H1 (cell line): ENCODE measurements at regions of chr17 and their contacts with region 1.

Region 1: GRCh38 chr17:43673516-43674323 is 12.0 kb upstream of the MEOX1 start:
- DNase-seq: peak in 1 of 2 experiments; percentile 93
- H3K4me3 ChIP-seq: no peak overlapping the region
- H3K27ac ChIP-seq: no peak overlapping the region
- H3K4me1 ChIP-seq: peaks cover 0 to 20% (median 13%) of the 10 kb centered on the region in 4 experiments; a peak in 6 of 7 replicates
- H3K27me3 ChIP-seq: 0 out of 7 replicates have a peak, but pooled peaks cover 0 to 2% (median 0%) of the 10 kb centered on the region in 4 experiments
- CTCF ChIP-seq: peak; percentile 84 to 92 (median 91)
- EP300 ChIP-seq: no peak
- POLR2A ChIP-seq: no peak
- RAD21 ChIP-seq: peak; percentile 94 to 95

Region 2: GRCh38 chr17:43517615-43518386 is 155.9 kb before region 1 on chr17:
- CTCF ChIA-PET with region 1: interaction called, 12 read pairs
- POLR2A ChIA-PET with region 1: no interaction called
- DNase-seq: no peak
- H3K4me3 ChIP-seq: no peak overlapping the region
- H3K27ac ChIP-seq: no peak overlapping the region
- H3K4me1 ChIP-seq: no peaks in the 10 kb centered on the region
- H3K27me3 ChIP-seq: no peaks in the 10 kb centered on the region
- CTCF ChIP-seq: no peak
- EP300 ChIP-seq: no peak
- POLR2A ChIP-seq: no peak
- RAD21 ChIP-seq: no peak

Region 3: DNA sequence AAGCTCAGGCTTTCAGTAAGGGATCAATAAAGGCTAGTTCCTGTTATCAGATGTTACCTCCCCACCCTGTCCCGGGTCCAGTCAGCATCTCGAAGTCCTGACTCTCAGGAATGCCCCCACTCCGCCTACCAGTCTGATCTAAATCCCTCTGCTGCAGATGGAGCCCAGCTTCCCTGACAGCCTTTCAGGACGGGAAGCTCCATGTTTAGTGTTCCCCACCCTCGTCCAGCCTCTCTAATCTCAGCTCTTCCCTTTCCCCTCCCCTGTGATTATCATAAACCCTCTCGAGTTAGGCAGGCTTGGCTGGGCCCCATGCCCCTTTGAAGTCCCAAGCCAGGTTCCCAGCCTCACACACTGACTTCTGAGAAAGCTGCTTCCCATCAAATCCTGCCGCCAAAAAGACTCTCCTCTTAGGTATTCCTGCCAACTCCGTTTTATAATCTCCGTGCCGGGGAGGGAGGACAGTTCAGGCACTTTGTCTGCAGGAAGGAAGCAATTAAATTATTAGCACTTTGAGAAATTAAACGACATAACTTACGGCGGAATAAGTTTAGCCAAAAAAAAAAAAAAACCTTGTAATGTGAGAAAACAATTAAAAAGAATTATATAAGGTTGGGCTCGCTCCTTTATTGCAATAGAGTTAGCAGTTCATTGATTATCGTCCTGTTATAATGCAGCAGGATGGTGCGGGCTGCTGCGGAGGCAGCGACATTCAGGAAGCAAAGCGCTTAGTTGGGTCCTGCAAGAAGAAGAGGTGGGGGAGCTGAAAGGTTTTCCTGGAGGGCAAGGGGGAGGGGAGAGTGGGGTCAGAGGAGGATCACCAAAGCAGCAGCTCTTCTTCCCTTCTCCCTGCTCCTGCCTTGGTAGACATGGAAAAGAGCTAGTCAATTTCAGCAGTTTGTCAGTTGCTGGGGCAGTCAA is 110.8 kb before region 1 on chr17:
- CTCF ChIA-PET with region 1: interaction called, 13 read pairs
- POLR2A ChIA-PET with region 1: interaction called, 5 read pairs
- DNase-seq: no peak
- H3K4me3 ChIP-seq: peak overlapping the region in 2 of 4 experiments; percentile 14 to 43; a peak in 3 of 8 replicates
- H3K27ac ChIP-seq: no peak overlapping the region
- H3K4me1 ChIP-seq: peaks cover 13 to 24% (median 20%) of the 10 kb centered on the region in 4 experiments
- H3K27me3 ChIP-seq: peaks cover 0 to 3% (median 1%) of the 10 kb centered on the region in 4 experiments; a peak in 3 of 7 replicates
- CTCF ChIP-seq: no peak
- EP300 ChIP-seq: no peak
- POLR2A ChIP-seq: no peak
- RAD21 ChIP-seq: no peak

Region 4: DNA sequence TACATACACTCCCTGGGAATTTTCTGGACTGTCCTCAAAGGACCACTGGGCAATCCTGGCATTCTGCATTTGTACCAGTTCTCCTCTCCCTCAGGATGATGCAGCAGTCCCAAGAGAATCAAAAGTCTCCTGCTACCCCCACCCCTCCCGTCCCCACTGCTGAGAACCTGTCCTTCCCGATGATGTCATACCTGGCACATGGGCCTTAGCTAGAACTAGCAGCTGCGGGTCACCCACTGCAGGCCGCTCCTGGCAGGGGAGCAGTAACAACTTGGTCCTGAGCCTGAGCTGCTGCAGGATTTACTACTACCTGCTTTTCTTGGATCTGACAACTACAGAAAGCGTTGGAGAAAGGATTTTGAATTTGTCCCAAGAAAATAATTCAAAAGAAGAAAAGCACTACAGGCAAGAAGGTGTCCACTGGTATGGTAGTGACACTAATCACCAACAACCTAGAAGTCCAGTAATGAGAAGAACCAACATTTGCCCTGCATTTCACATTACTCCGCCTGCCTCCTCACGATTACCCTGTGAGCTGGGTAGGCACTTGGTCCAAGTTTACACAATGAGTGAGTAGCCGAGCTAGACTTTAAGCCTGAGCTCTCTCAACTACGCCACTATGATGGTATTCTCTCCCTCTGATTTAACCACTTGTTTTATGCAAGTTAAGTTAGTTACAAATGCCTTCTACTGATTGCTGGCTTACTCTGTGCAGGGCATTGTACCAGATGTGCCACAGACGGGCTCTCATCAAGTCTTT is 72.3 kb before region 1 on chr17:
- CTCF ChIA-PET with region 1: interaction called, 18 read pairs
- POLR2A ChIA-PET with region 1: no interaction called
- DNase-seq: no peak
- H3K4me3 ChIP-seq: no peak overlapping the region
- H3K27ac ChIP-seq: no peak overlapping the region
- H3K4me1 ChIP-seq: no peaks in the 10 kb centered on the region; a peak in 3 of 7 replicates
- H3K27me3 ChIP-seq: no peaks in the 10 kb centered on the region
- CTCF ChIP-seq: no peak
- EP300 ChIP-seq: no peak
- POLR2A ChIP-seq: no peak
- RAD21 ChIP-seq: no peak

Region 5: DNA sequence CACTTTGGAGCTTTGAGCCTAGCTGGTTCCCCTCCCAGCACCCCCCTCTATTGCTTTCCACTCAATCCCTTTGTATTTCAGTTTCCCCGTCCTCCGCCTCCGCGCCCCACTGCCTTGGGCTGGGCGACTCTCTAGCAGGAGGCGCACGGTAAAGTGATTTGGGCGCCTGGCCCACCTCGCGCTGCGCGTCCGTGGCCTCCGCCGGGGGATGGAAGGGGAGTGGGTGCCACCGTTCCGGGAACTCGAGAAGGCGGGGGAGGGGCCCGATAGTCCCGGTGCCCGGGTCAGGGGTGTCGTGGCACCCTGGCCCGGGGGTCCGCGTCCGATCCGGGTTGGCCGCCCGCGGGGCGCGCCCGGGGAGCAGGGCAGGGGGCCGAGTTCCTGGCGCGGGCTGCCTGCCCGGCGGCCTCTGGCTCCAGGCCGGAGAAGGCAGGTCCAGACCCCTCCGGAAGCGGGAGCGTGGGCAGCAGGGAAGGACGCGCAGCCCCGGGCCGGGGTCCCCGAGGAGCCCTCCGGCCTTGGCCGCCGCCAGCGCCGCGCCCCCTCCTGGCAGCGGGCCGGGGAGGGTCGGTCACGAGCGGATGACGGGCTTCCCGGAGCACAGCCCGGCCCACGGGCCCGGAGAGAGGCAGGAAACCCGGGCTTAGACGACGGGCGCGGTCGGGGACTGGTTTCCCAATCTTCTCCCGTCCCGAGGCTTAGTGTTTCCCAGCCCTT is 27.8 kb before region 1 on chr17:
- CTCF ChIA-PET with region 1: interaction called, 13 read pairs
- POLR2A ChIA-PET with region 1: interaction called, 3 read pairs
- DNase-seq: peak in 1 of 2 experiments; percentile 78
- H3K4me3 ChIP-seq: peak overlapping the region; percentile 26 to 71 (median 44); a peak in 7 of 8 replicates
- H3K27ac ChIP-seq: no peak overlapping the region
- H3K4me1 ChIP-seq: peaks cover 0 to 6% (median 2%) of the 10 kb centered on the region in 4 experiments; a peak in 2 of 7 replicates
- H3K27me3 ChIP-seq: peaks cover 0 to 20% (median 6%) of the 10 kb centered on the region in 4 experiments; a peak in 4 of 7 replicates
- CTCF ChIP-seq: peak; percentile 6 to 48 (median 48); a peak in 3 of 4 replicates
- EP300 ChIP-seq: no peak
- POLR2A ChIP-seq: no peak
- RAD21 ChIP-seq: peak; percentile 11 to 48; a peak in 2 of 4 replicates

Region 6: DNA sequence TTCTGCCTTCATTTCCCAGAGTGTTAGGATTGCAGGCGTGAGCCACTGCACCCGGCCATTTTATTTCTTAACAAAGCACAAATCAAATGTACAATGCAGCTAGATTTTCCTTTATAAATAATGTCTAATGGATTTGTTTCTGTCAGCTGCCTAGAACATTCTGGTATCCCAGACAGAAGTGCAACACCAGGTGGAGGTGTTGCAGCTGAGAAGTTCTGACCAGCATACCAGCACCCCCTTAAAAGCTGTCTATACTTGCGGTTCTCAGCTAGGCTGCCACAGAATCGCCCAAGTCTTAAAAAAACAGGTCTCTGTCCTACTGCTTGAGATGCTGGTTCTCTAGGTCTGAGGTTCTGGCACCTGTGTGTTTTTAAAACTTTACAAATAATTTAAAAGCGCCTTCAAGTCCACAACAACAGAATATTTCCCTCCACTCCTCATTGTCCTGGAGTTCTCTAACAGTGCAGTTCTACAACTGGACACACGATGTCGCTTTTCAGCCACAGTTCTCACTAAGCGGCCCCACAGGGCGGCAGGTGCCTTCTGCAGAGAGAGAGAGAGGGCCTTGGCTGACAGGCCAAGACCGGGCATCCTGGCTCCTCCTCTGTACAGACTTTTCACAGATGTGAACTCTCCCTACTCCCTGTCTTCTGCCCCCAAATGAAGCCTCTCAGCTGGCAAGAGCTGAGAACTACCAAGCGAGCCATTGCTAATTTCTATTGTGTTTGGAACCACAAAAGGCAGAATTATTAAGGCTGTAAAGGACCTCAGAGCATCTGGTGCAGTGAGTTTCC is 20.6 kb after region 1 on chr17:
- CTCF ChIA-PET with region 1: interaction called, 73 read pairs
- POLR2A ChIA-PET with region 1: no interaction called
- DNase-seq: peak in 1 of 2 experiments; percentile 85
- H3K4me3 ChIP-seq: no peak overlapping the region; a peak in 1 of 8 replicates
- H3K27ac ChIP-seq: no peak overlapping the region
- H3K4me1 ChIP-seq: peaks cover 0 to 6% (median 4%) of the 10 kb centered on the region in 4 experiments; a peak in 3 of 7 replicates
- H3K27me3 ChIP-seq: no peaks in the 10 kb centered on the region
- CTCF ChIP-seq: peak; percentile 65 to 98 (median 83)
- EP300 ChIP-seq: no peak
- POLR2A ChIP-seq: no peak
- RAD21 ChIP-seq: peak; percentile 95 to 98

Region 7: DNA sequence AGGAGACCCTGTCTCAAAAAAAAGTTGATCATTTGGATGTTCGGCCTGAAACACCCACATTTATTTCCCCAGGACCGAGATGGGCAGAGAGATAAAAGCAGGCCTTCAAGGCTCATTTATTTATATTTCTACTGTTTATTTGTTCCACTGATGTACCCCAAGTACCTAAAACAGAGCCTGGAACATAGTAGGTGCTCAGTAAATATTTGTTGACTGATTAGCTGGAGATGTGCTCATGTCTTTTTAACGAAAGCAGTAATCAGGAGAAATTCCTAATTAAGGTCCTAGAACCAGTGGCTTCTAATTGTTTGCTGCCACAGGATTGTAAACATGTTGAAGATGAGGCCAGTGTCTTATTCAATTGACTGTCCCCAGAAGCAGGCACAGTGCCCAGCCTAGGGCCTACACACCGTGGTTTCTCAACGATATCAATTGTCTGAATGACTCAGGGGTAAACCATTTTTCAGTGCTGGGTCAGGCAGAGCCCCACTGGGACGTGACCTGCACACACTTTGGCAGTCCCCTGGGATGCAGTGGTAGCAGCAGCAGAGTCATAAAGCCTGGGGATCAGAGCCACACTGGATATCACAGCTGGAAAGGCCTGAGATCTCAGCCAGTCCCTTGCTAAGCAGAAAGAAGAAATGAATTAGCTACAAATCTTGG is 50.1 kb after region 1 on chr17:
- CTCF ChIA-PET with region 1: no interaction called
- POLR2A ChIA-PET with region 1: no interaction called
- DNase-seq: no peak
- H3K4me3 ChIP-seq: no peak overlapping the region
- H3K27ac ChIP-seq: no peak overlapping the region
- H3K4me1 ChIP-seq: peaks cover 0 to 3% (median 1%) of the 10 kb centered on the region in 4 experiments; a peak in 3 of 7 replicates
- H3K27me3 ChIP-seq: no peaks in the 10 kb centered on the region; a peak in 1 of 7 replicates
- CTCF ChIP-seq: no peak
- EP300 ChIP-seq: no peak
- POLR2A ChIP-seq: no peak
- RAD21 ChIP-seq: no peak

Region 8: DNA sequence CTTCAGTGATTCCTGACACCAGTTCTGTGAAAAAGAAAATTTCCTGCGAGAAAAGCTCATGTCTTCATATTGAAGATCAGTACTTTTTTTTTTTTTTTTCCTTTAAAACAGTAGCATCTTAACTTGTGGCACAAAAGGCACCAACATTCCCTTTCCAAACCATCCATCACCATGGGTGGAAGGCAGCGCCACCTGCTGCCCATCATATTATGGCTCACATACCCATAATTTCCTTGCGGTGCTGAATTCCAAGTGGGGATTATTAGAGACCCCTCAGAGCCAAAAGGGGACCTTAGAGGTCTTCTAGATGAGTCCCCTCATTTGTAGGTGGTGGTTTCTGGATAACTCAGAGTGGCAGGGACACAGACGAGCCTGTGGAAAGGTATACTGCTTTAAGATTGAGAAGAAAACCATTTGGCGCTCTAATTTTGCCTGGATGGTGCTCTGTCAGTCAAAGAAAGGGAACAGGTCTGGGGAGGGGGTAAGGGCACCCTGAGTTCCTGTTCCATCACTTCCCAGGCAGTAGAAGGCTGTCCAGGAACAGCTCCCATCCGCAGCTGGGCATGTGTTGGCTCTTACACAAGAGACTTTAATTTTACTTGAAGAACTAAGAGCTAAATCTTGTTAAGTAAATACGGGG is 92.8 kb after region 1 on chr17:
- CTCF ChIA-PET with region 1: interaction called, 38 read pairs
- POLR2A ChIA-PET with region 1: no interaction called
- DNase-seq: peak in 1 of 2 experiments; percentile 86
- H3K4me3 ChIP-seq: no peak overlapping the region
- H3K27ac ChIP-seq: no peak overlapping the region
- H3K4me1 ChIP-seq: no peaks in the 10 kb centered on the region
- H3K27me3 ChIP-seq: no peaks in the 10 kb centered on the region
- CTCF ChIP-seq: peak; percentile 77 to 88 (median 84)
- EP300 ChIP-seq: no peak
- POLR2A ChIP-seq: no peak
- RAD21 ChIP-seq: peak; percentile 62 to 67